Activated CD8-positive, alpha-beta T cell treated with anti-CD3 and anti-CD28 coated beads for 36 hours (primary cell): ENCODE measurements at regions of chr2 and their contacts with region 1.

Region 1: DNA sequence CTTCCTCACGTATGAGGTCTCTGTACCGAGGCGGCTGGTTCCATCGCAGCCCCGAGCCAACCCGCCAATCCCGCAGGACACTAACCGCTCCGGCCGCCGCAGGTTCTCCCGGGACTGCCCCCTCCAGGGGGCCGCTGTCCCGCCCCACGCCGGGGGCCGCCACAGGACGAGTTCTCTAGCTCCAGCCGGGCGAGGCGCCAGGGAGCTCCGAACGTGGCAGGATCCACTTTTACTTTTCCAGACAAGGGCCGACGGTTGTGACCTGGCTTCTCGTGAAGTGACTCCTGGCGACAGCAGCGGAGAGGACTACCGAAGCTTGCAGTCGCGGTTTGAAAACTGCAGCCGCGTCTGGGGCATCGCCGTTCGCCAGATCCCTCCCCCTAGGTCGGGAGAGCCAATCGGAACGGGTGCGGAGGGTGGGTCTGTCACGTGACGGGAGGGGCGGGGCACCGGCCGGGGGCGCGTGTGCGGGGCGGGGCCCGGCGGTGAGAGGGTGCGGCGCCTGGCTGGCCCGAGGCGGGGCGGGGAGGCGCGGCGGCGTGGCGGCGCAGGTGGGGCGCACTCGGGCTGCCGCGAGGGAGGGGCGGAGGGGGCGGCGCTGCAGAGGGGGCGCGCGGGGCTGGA is at the start of gene STK17B:
- DNase-seq: peak; percentile 97
- ATAC-seq: peak; percentile 70
- H3K4me3 Mint-ChIP-seq: peak within 1 kb of the TSS; percentile 99
- H3K27ac Mint-ChIP-seq: peak within 1 kb of the TSS; percentile 91
- H3K4me1 Mint-ChIP-seq: peaks cover 34% of the 10 kb centered on the region
- H3K27me3 Mint-ChIP-seq: no peaks in the 10 kb centered on the region
- CTCF ChIP-seq: no peak
- total RNA-seq, gene STK17B: 237 to 250 TPM

Region 2: GRCh38 chr2:196076778-196077568 is 94.4 kb before region 1 on chr2:
- CTCF ChIA-PET with region 1: interaction called, 18 read pairs
- POLR2A ChIA-PET with region 1: interaction called, 3 read pairs
- intact Hi-C with region 1: no loop called
- DNase-seq: peak; percentile 18
- ATAC-seq: peak; percentile 56
- H3K4me3 Mint-ChIP-seq: no peak overlapping the region
- H3K27ac Mint-ChIP-seq: no peak overlapping the region
- H3K4me1 Mint-ChIP-seq: peaks cover 29% of the 10 kb centered on the region
- H3K27me3 Mint-ChIP-seq: no peaks in the 10 kb centered on the region
- CTCF ChIP-seq: no peak

Region 3: GRCh38 chr2:196182439-196183171 is 11.2 kb after region 1 on chr2:
- CTCF ChIA-PET with region 1: interaction called, 4 read pairs
- POLR2A ChIA-PET with region 1: interaction called, 42 read pairs
- intact Hi-C with region 1: no loop called
- DNase-seq: no peak
- ATAC-seq: peak; percentile 61
- H3K4me3 Mint-ChIP-seq: peak overlapping the region; percentile 76
- H3K27ac Mint-ChIP-seq: peak overlapping the region; percentile 93
- H3K4me1 Mint-ChIP-seq: peaks cover 76% of the 10 kb centered on the region
- H3K27me3 Mint-ChIP-seq: no peaks in the 10 kb centered on the region
- CTCF ChIP-seq: no peak

Region 4: GRCh38 chr2:196225213-196225612 is 53.9 kb after region 1 on chr2:
- CTCF ChIA-PET with region 1: interaction called, 6 read pairs
- POLR2A ChIA-PET with region 1: interaction called, 47 read pairs
- intact Hi-C with region 1: no loop called
- DNase-seq: no peak
- ATAC-seq: no peak
- H3K4me3 Mint-ChIP-seq: peak overlapping the region; percentile 22
- H3K27ac Mint-ChIP-seq: peak overlapping the region; percentile 61
- H3K4me1 Mint-ChIP-seq: peaks cover 84% of the 10 kb centered on the region
- H3K27me3 Mint-ChIP-seq: no peaks in the 10 kb centered on the region
- CTCF ChIP-seq: no peak

Region 5: DNA sequence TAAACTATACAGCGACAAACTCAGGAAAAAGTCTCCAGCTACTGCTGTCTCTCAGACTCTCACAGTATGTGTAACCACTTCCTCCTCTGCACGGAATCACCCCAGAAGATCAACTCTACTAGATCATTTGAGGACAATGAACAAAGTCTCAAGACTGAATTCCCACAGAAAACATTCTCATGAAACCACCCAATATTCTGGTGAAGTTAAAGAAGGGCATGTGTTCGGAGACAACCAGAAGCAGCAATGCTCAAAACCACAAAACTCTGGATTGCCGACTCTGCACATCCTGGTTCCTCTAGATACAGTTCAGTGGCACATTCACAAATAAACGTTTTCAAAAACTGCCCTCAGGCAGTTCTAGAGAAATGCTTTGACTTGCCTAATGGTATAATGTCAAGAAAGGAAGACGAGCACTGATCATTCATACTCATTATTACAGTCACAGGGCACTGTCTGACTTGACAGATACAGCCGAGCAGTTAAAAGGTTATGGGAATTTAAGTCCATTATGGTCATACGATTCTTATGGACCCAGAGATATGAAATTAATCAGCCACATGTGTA is 91.9 kb after region 1 on chr2:
- CTCF ChIA-PET with region 1: interaction called, 6 read pairs
- POLR2A ChIA-PET with region 1: interaction called, 56 read pairs
- intact Hi-C with region 1: loop called (anchors 5 kb)
- DNase-seq: peak; percentile 62
- ATAC-seq: peak; percentile 60
- H3K4me3 Mint-ChIP-seq: peak overlapping the region; percentile 67
- H3K27ac Mint-ChIP-seq: peak overlapping the region; percentile 90
- H3K4me1 Mint-ChIP-seq: peaks cover 79% of the 10 kb centered on the region
- H3K27me3 Mint-ChIP-seq: no peaks in the 10 kb centered on the region
- CTCF ChIP-seq: no peak